Sigmoid colon (tissue), 7 donors: ENCODE measurements at regions of chr12 and their contacts with region 1.

Region 1: DNA sequence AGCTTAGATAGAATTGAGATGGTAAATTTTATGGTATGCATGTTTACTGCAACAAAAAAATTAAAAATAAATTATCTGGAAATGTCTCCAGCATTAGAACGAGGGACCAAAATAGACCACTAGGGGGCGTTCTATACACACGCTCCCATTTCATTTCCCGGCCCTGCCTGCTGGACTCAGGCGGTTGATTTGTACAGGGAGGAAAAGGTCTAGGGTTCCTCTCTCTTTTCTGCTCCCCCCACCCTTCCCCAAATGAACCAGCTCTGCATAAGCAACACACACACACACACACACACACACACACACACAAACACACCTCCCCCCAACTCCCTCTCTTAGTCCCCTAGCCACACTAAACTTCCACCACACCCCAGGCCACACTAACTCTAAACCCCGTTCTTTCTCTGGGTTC is 7.8 kb upstream of the DTX1 start:
- DNase-seq: no peak
- H3K4me3 ChIP-seq: no peak overlapping the region
- H3K27ac ChIP-seq: no peak overlapping the region
- H3K4me1 ChIP-seq: no peaks in the 10 kb centered on the region
- H3K27me3 ChIP-seq: peaks cover 0 to 39% (median 0%) of the 10 kb centered on the region in 3 donors
- CTCF ChIP-seq: peak; percentile 48 to 79 (median 62)
- EP300 ChIP-seq: no peak
- POLR2A ChIP-seq: no peak

Region 2: GRCh38 chr12:112382232-112382796 is 666.4 kb before region 1 on chr12 and contains the start of gene HECTD4:
- intact Hi-C with region 1: no loop called
- DNase-seq: peak; percentile 95
- H3K4me3 ChIP-seq: peak within 1 kb of the TSS; percentile 79 to 99 (median 86)
- H3K27ac ChIP-seq: peak within 1 kb of the TSS; percentile 84 to 94 (median 87)
- H3K4me1 ChIP-seq: peaks cover 0 to 32% (median 32%) of the 10 kb centered on the region in 4 donors
- H3K27me3 ChIP-seq: no peaks in the 10 kb centered on the region
- CTCF ChIP-seq: no peak
- EP300 ChIP-seq: no peak
- POLR2A ChIP-seq: peak; percentile 5 to 67
- total RNA-seq, gene HECTD4: 26.0 to 64.8 (median 37.0) TPM

Region 3: DNA sequence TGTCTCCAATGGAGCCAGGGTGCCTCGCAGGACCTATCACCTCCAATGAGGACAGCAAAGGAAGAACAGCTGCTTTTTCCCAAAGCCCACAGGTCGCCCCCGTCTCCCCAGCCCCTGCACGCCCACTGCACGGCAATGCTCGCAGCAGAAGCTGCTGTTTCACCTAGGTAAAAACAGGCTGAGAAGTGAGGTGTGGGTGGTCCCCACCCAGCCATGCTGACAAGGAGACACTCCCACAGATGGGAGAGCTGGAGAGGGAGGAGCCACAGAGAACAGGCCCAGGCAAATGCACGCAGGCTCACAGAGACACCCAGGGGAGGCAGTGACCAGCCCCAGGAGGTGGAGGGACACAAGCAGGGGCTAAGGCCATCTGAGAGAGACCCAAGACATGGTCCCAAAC is 111.2 kb after region 1 on chr12:
- intact Hi-C with region 1: loop called (anchors 5 kb)
- DNase-seq: no peak
- H3K4me3 ChIP-seq: no peak overlapping the region
- H3K27ac ChIP-seq: no peak overlapping the region
- H3K4me1 ChIP-seq: peaks cover 0 to 5% (median 0%) of the 10 kb centered on the region in 4 donors
- H3K27me3 ChIP-seq: peaks cover 3 to 23% (median 3%) of the 10 kb centered on the region in 3 donors
- CTCF ChIP-seq: no peak
- EP300 ChIP-seq: no peak
- POLR2A ChIP-seq: no peak

Region 4: GRCh38 chr12:113174461-113175384 is 126.0 kb after region 1 on chr12:
- intact Hi-C with region 1: loop called (anchors 2 kb)
- DNase-seq: no peak
- H3K4me3 ChIP-seq: no peak overlapping the region
- H3K27ac ChIP-seq: no peak overlapping the region
- H3K4me1 ChIP-seq: no peaks in the 10 kb centered on the region
- H3K27me3 ChIP-seq: no peaks in the 10 kb centered on the region
- CTCF ChIP-seq: peak; percentile 66 to 99 (median 88)
- EP300 ChIP-seq: no peak
- POLR2A ChIP-seq: no peak